CD8-positive, alpha-beta memory T cell (primary cell): ENCODE measurements at regions of chr6 and their contacts with region 1.

Region 1: GRCh38 chr6:32195652-32195901 is 3.1 kb upstream of the GPSM3 start:
- DNase-seq: peak; percentile 99 to 100 (median 100)
- H3K4me3 ChIP-seq: peak overlapping the region; percentile 78
- H3K4me3 Mint-ChIP-seq: peak overlapping the region; percentile 92 to 100 (median 96)
- H3K27ac ChIP-seq: peak overlapping the region; percentile 99
- H3K27ac Mint-ChIP-seq: peak overlapping the region; percentile 98 to 100 (median 100)
- H3K4me1 ChIP-seq: peaks cover 34% of the 10 kb centered on the region
- H3K4me1 Mint-ChIP-seq: peaks cover 31 to 46% (median 33%) of the 10 kb centered on the region in 3 donors
- H3K27me3 ChIP-seq: no peaks in the 10 kb centered on the region
- H3K27me3 Mint-ChIP-seq: peaks cover 2 to 6% of the 10 kb centered on the region in 2 donors

Region 2: GRCh38 chr6:32127717-32128592 is 67.6 kb before region 1 on chr6 and contains the start of gene ATF6B:
- CTCF ChIA-PET with region 1: interaction called, 18 read pairs
- POLR2A ChIA-PET with region 1: interaction called, 34 read pairs
- DNase-seq: peak; percentile 95 to 99 (median 96)
- H3K4me3 ChIP-seq: peak within 1 kb of the TSS; percentile 97
- H3K4me3 Mint-ChIP-seq: peak within 1 kb of the TSS; percentile 95 to 100 (median 99)
- H3K27ac ChIP-seq: peak within 1 kb of the TSS; percentile 95
- H3K27ac Mint-ChIP-seq: peak within 1 kb of the TSS; percentile 85 to 99 (median 98)
- H3K4me1 ChIP-seq: peaks cover 30% of the 10 kb centered on the region
- H3K4me1 Mint-ChIP-seq: peaks cover 48 to 63% (median 59%) of the 10 kb centered on the region in 3 donors
- H3K27me3 ChIP-seq: no peaks in the 10 kb centered on the region
- H3K27me3 Mint-ChIP-seq: peaks cover 2 to 4% of the 10 kb centered on the region in 2 donors
- total RNA-seq, gene ATF6B: 72.5 to 74.4 TPM

Region 3: GRCh38 chr6:32140420-32141046 is 55.0 kb before region 1 on chr6:
- CTCF ChIA-PET with region 1: no interaction called
- POLR2A ChIA-PET with region 1: no interaction called
- DNase-seq: no peak
- H3K4me3 ChIP-seq: no peak overlapping the region
- H3K4me3 Mint-ChIP-seq: no peak overlapping the region
- H3K27ac ChIP-seq: no peak overlapping the region
- H3K27ac Mint-ChIP-seq: peak overlapping the region in 1 of 8 donors; percentile 63
- H3K4me1 ChIP-seq: no peaks in the 10 kb centered on the region
- H3K4me1 Mint-ChIP-seq: no peaks in the 10 kb centered on the region
- H3K27me3 ChIP-seq: no peaks in the 10 kb centered on the region
- H3K27me3 Mint-ChIP-seq: peaks cover 11% of the 10 kb centered on the region in 2 donors